Aorta (tissue), 5 donors: ENCODE measurements at regions of chr1 and their contacts with region 1.

Region 1: GRCh38 chr1:51661081-51661518 is 44.2 kb downstream of the OSBPL9 start:
- DNase-seq: no peak
- ATAC-seq: peak; percentile 89
- H3K4me3 ChIP-seq: no peak overlapping the region
- H3K27ac ChIP-seq: peak overlapping the region; percentile 28 to 44
- H3K4me1 ChIP-seq: peaks cover 5 to 13% of the 10 kb centered on the region in 2 donors
- H3K27me3 ChIP-seq: no peaks in the 10 kb centered on the region

Region 2: GRCh38 chr1:51708911-51709760 is 48.0 kb after region 1 on chr1:
- intact Hi-C with region 1: no loop called
- DNase-seq: no peak
- ATAC-seq: no peak
- H3K4me3 ChIP-seq: no peak overlapping the region
- H3K27ac ChIP-seq: no peak overlapping the region
- H3K4me1 ChIP-seq: no peaks in the 10 kb centered on the region
- H3K27me3 ChIP-seq: no peaks in the 10 kb centered on the region

Region 3: GRCh38 chr1:51729824-51730301 is 68.8 kb after region 1 on chr1:
- intact Hi-C with region 1: loop called in 1 of 2 experiments (anchors 5 kb)
- DNase-seq: peak in 1 of 2 donors; percentile 82
- ATAC-seq: peak; percentile 58
- H3K4me3 ChIP-seq: peak overlapping the region; percentile 82 to 89
- H3K27ac ChIP-seq: peak overlapping the region in 1 of 2 donors; percentile 58
- H3K4me1 ChIP-seq: peaks cover 6 to 7% of the 10 kb centered on the region in 2 donors
- H3K27me3 ChIP-seq: no peaks in the 10 kb centered on the region

Region 4: GRCh38 chr1:51760872-51761271 is 99.8 kb after region 1 on chr1:
- intact Hi-C with region 1: loop called (anchors 5 kb)
- DNase-seq: no peak
- ATAC-seq: no peak
- H3K4me3 ChIP-seq: no peak overlapping the region
- H3K27ac ChIP-seq: no peak overlapping the region
- H3K4me1 ChIP-seq: peaks cover 0 to 4% of the 10 kb centered on the region in 2 donors
- H3K27me3 ChIP-seq: no peaks in the 10 kb centered on the region

Region 5: GRCh38 chr1:51768971-51769588 is 108.0 kb after region 1 on chr1:
- intact Hi-C with region 1: loop called in 1 of 2 experiments (anchors 5 kb)
- DNase-seq: no peak
- ATAC-seq: peak; percentile 83
- H3K4me3 ChIP-seq: no peak overlapping the region
- H3K27ac ChIP-seq: no peak overlapping the region
- H3K4me1 ChIP-seq: peaks cover 0 to 2% of the 10 kb centered on the region in 2 donors
- H3K27me3 ChIP-seq: no peaks in the 10 kb centered on the region